ENCODE measurements at regions of chr2 and their contacts with region 1.

Region 1: DNA sequence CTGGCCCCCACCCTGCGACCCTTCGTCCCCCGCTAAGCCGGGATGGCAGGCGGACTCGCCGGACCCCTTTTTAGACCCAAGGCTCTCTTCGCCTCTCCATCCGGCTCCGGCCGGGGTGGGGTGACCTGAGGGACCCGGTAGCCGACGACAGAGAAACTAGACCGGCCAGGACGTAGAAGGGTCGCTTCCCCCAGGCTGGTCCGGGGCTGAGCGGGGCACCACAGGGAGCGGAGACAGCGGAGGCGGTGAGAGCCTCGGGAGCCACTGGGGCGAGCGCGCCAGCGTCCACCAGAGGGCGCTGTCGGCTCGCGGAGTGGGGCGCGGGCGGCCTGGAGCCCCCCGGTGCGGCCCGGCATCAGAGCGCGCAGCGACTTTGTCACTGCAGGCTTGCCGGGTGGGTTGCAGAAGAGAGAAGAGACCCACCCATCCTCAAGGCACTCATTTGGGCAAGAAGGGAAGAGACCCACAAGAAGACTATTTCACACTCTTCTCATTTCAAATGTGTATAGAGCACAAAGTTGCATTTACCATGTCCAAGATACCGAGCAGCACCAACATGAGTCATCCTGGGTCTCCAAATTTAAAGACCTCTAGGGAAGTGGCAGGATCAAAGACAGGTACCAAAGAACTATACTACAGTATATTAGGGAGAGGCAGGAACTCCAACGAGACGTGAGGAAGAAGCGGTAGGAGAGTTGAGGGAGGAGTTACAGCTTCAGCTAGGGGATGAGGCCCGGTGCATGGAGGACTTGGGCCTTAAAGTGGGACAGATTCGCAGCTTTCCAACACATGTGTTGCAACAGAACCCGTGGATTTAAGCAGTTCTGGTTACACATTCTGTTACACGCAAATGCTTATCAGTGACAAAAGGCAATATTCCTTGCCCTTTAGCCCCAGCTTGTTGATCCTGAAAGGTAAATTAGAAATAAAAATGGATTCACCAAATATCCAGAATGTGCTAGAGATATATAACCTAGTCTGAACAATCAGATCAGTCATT is 7.6 kb upstream of the PRKCE start:
- DNase-seq: peak; percentile 37 to 89 (median 72)
- ATAC-seq: peak; percentile 97
- H3K4me3 ChIP-seq: peak overlapping the region; percentile 50
- H3K4me3 Mint-ChIP-seq: no peak overlapping the region
- H3K27ac ChIP-seq: no peak overlapping the region
- H3K27ac Mint-ChIP-seq: no peak overlapping the region
- H3K4me1 ChIP-seq: peaks cover 10% of the 10 kb centered on the region
- H3K4me1 Mint-ChIP-seq: peaks cover 6% of the 10 kb centered on the region
- H3K27me3 ChIP-seq: peaks cover 15 to 22% of the 10 kb centered on the region in 2 experiments
- H3K27me3 Mint-ChIP-seq: peaks cover 33% of the 10 kb centered on the region
- CTCF ChIP-seq: peak; percentile 90

Region 2: DNA sequence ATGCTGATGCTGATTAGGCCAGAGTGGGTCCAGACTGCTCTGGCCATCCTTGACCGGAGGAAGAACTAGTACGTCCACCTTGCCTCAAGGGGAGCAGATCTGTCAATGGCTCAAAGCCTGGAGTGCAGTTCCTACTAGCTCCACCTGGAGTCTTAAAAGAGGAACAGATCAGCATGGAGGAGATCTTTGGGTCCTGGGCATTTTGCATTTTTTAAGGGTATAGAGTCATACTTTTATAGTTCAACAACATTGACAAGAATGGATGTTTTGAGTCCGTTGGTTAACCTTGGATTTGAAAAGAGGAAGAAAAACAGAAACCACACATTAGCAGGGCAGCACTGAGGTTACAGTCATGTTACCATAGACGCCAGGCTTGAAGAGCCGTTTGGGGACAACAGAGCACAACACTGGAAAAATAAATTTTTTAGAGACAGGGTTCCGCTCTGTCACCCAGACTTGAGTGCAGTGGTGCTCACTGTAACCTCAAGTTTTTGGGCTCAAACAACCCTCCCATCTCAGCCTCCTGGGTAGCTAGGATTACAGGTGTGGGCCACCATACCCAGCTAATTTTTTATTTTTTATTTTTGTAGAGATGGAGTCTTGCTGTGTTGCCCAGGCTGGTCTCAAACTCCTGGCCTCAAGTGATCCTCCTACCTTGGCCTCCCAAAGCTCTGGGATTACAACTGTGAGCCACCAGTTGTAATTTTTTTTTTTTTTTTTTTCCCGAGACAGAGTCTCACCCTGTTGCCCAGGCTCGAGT is 86.1 kb after region 1 on chr2:
- CTCF ChIA-PET with region 1: no interaction called
- POLR2A ChIA-PET with region 1: no interaction called
- intact Hi-C with region 1: loop called in 1 of 2 experiments (anchors 5 kb)
- DNase-seq: peak in 3 of 14 experiments; percentile 25 to 39 (median 31)
- ATAC-seq: peak; percentile 32
- H3K4me3 ChIP-seq: no peak overlapping the region
- H3K4me3 Mint-ChIP-seq: no peak overlapping the region
- H3K27ac ChIP-seq: no peak overlapping the region
- H3K27ac Mint-ChIP-seq: no peak overlapping the region
- H3K4me1 ChIP-seq: no peaks in the 10 kb centered on the region
- H3K4me1 Mint-ChIP-seq: no peaks in the 10 kb centered on the region
- H3K27me3 ChIP-seq: no peaks in the 10 kb centered on the region
- H3K27me3 Mint-ChIP-seq: no peaks in the 10 kb centered on the region
- CTCF ChIP-seq: no peak

Region 3: GRCh38 chr2:45778720-45779171 is 134.9 kb after region 1 on chr2:
- CTCF ChIA-PET with region 1: interaction called, 43 read pairs
- POLR2A ChIA-PET with region 1: no interaction called
- intact Hi-C with region 1: loop called (anchors 1 kb)
- DNase-seq: peak; percentile 43 to 87 (median 64)
- ATAC-seq: peak; percentile 90
- H3K4me3 ChIP-seq: no peak overlapping the region
- H3K4me3 Mint-ChIP-seq: peak overlapping the region; percentile 27
- H3K27ac ChIP-seq: no peak overlapping the region
- H3K27ac Mint-ChIP-seq: no peak overlapping the region
- H3K4me1 ChIP-seq: peaks cover 5% of the 10 kb centered on the region
- H3K4me1 Mint-ChIP-seq: peaks cover 6% of the 10 kb centered on the region
- H3K27me3 ChIP-seq: no peaks in the 10 kb centered on the region
- H3K27me3 Mint-ChIP-seq: no peaks in the 10 kb centered on the region
- CTCF ChIP-seq: peak; percentile 89

Region 4: DNA sequence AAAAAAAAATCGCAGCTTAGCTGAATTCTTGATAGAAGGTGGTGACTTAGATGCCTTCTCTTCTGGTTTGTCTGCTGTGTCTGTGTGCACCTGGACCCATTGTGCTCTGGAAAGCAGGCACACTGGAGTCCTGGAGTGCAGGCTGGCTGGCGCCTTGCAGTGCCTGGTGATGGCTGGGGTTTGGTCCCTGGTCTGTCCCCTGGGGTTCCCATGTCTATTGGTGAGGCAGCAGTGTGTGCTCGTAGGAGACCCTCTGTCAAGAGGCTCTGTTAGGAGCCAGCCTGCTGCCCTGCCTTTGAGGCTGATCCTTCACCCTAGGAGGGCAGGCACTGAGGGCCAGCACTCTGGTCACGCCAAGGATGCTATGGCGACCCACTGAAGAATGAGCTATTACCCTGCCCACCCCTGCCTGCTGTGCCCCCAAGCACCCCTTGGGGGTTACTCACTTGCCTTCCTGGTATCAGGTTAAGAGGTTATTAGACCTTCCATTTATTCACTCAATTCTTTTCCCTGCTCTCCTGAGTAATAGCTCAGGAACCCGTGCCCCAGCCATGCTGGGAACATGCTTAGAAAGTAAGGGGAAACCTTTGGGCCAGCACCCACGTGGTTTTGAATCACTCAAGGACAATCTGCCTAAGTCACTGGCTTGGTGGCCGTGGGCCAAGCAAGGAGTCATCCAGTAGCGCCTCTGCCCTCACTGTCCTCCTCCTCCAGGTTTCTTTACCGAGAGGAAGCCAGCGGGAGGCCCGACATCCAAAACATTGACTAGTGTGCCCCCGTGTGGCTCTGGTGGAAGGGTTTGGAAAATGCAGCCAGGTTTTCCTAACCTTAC is 292.2 kb after region 1 on chr2:
- CTCF ChIA-PET with region 1: no interaction called
- POLR2A ChIA-PET with region 1: no interaction called
- intact Hi-C with region 1: loop called in 1 of 2 experiments (anchors 2 kb)
- DNase-seq: peak; percentile 2 to 76 (median 22)
- ATAC-seq: peak; percentile 46
- H3K4me3 ChIP-seq: no peak overlapping the region
- H3K4me3 Mint-ChIP-seq: no peak overlapping the region
- H3K27ac ChIP-seq: no peak overlapping the region
- H3K27ac Mint-ChIP-seq: no peak overlapping the region
- H3K4me1 ChIP-seq: peaks cover 4% of the 10 kb centered on the region
- H3K4me1 Mint-ChIP-seq: no peaks in the 10 kb centered on the region
- H3K27me3 ChIP-seq: no peaks in the 10 kb centered on the region
- H3K27me3 Mint-ChIP-seq: no peaks in the 10 kb centered on the region
- CTCF ChIP-seq: peak; percentile 38

Region 5: DNA sequence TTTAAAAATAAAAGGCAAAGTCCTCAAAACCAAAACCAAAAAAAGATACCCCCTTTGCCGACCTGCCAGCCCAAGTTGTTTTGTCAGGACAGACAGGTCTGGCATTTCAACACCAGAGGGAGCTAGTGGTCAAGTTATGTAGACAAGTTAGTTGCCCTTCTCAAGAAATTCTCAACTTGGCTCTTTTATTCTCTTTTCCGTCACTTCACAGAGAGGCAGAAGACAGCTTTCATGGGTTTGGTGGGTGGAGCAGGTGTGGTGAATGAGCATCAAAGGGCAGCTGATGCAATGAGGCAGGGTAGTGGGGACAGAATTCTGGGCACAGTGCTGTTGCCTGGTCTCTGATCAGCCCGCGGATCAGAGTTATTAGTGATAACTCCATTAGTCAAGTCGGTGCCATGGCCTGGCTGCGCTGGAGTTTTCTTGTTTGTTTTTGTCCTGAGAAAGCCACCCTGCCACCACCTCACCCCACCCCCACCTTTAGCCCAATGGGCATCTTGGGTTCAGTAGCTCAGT is 349.7 kb after region 1 on chr2:
- CTCF ChIA-PET with region 1: no interaction called
- POLR2A ChIA-PET with region 1: no interaction called
- intact Hi-C with region 1: loop called in 1 of 2 experiments (anchors 5 kb)
- DNase-seq: peak in 13 of 14 experiments; percentile 8 to 80 (median 42)
- ATAC-seq: peak; percentile 68
- H3K4me3 ChIP-seq: no peak overlapping the region
- H3K4me3 Mint-ChIP-seq: no peak overlapping the region
- H3K27ac ChIP-seq: no peak overlapping the region
- H3K27ac Mint-ChIP-seq: no peak overlapping the region
- H3K4me1 ChIP-seq: no peaks in the 10 kb centered on the region
- H3K4me1 Mint-ChIP-seq: peaks cover 6% of the 10 kb centered on the region
- H3K27me3 ChIP-seq: no peaks in the 10 kb centered on the region
- H3K27me3 Mint-ChIP-seq: no peaks in the 10 kb centered on the region
- CTCF ChIP-seq: peak; percentile 80

Region 6: DNA sequence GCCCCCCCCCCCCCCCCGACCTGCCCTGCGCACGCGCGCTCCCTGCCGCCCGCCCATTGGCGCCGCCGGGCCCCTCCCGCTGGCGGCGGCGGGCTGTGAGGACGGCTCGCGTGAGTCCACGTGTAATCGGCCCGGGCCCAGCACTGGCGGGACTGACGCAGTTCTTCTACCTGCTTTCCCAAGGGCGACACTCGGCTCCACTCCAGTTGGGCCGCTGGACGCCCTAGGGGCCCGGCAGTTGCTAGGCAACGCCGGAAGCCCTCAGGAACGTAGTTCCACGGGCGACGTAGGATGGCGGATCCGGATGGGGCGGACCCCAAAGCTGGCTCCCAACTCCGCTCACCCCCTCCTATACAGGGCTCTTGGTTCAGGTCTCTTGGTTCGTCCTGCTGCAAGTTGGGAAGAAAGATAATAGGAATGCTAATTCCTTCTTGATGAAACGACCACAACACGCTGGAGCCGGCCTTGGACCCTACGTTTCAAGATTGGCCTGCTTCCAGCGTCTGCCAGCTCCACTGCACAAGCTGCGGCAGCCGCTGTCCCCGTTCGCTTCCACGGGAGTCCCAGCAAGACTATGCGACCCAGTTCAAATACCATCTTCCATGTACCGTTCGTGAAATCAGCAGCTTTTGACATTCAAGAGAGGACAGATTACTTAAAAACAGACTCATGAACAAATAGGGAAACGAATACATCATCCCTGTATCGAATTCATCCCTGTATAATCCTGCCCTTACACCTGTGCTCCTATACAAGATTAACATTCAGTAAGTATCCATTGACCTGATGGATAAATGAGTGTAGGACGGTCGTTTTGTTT is 1272.2 kb after region 1 on chr2:
- CTCF ChIA-PET with region 1: no interaction called
- POLR2A ChIA-PET with region 1: no interaction called
- intact Hi-C with region 1: loop called in 1 of 2 experiments (anchors 10 kb)
- DNase-seq: peak; percentile 54 to 92 (median 74)
- ATAC-seq: peak; percentile 85
- H3K4me3 ChIP-seq: peak overlapping the region; percentile 80
- H3K4me3 Mint-ChIP-seq: peak overlapping the region; percentile 82
- H3K27ac ChIP-seq: peak overlapping the region; percentile 74 to 87
- H3K27ac Mint-ChIP-seq: peak overlapping the region; percentile 86
- H3K4me1 ChIP-seq: peaks cover 41% of the 10 kb centered on the region
- H3K4me1 Mint-ChIP-seq: peaks cover 65% of the 10 kb centered on the region
- H3K27me3 ChIP-seq: no peaks in the 10 kb centered on the region
- H3K27me3 Mint-ChIP-seq: no peaks in the 10 kb centered on the region
- CTCF ChIP-seq: no peak